Astrocyte of the cerebellum (primary cell): ENCODE measurements at regions of chr9 and their contacts with region 1.

Region 1: DNA sequence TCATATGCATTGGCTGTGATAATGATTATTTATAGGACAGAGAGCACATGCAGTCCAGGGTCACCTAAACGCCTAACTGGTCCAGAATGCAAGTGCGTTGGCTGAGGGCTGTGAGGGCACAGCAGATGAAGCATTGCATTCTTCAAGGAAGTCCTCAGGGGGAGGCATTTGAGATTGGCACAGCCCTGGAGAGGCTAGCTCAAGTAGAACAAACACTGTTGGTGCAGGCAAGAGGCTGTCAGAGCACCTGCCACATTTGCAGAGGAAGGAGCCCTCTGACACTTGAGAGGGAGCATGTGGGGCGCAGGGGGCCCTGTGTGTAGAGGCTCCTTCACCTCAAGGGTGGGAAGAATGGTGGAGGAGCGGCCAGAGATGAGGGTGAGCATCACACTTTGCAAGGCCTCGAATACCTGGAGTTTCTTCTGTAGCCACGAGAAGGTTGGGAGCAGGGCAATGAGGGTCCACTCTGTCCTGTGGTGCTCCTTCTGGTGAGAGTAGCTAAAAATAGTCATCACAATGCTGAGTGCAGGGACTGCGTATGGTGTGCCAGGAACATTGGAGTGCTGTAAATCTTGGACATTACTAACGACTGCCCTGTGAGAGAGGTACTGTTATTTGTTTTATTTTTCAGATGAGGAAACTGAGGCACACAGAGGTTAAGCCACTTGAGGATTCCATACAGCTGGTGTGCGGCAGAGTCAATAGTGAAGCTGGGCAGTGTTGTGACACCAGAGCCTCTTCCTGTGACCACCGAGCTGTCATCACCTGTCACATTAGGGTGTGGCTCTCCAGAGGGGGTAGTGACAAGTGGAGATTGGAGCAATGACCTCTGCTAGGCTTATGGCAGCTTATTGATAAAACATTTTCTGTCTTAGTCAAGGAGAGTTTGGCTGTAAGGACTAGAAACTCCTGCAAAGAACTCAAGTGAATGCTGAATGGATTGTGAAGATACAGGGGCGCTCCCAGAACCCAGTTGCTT is 100.2 kb downstream of the PIP5K1B start:
- DNase-seq: no peak
- H3K4me3 ChIP-seq: no peak overlapping the region
- CTCF ChIP-seq: no peak

Region 2: DNA sequence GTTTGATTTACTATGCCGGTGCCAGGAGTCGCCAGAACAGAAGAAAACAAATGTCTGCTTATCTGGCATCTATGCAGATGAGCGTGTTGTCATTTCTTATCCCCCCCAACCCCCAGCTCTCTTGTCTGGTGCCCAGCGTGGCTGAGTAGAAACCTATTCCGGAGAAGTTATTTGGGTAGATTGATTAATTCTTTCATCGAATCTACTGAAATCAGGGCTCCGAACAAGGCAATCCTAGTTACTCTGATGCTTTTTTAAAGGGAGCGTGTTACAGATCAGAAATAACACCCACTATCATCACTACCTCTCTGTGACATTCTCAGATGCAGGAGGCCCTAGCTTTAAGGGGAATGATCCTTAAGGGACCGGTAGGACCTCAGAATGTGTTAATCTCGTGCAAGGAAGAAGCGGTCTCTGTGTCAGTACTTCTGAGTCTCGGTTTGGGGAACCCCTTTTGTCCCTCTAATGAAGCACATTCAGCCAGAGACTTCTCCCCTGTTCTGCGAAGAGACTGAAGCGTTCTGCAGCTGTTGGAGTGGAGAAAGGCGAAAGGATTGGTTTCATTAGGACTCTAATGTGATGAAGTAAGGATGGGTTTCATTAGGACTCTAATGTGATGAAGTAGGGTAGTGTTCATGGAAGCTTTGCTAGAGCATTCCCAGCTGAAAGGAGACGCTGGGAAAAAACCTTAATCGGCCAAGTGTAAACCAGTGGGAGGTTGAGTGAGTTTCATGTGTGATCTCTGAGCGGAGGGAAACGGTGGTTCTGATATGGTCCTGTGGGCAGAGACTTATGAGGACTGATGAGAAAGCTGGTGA is 98.6 kb before region 1 on chr9:
- in situ Hi-C with region 1: no loop called
- DNase-seq: no peak
- H3K4me3 ChIP-seq: no peak overlapping the region
- CTCF ChIP-seq: no peak

Region 3: DNA sequence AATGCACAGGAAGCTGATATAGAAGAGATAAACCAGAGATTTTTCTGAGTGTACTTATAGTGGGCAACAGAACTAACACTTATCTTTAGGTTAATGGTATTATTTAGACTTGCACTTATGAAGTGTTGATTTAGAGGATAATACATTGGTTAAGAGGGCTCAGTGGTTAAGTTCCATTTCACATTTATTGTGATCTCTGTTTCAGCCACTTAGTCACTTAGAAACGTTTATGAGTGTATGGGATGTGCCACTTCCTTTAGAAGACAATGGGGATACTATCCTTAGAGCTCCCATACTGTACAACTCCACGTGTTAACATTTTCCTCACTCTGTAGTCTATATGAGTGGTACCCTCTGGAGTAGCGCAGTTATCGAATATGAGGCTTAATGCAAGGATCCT is 42.6 kb before region 1 on chr9:
- in situ Hi-C with region 1: loop called (anchors 5 kb)
- DNase-seq: no peak
- H3K4me3 ChIP-seq: no peak overlapping the region
- CTCF ChIP-seq: no peak

Region 4: GRCh38 chr9:68844631-68845612 is 39.7 kb after region 1 on chr9:
- in situ Hi-C with region 1: loop called (anchors 5 kb)
- DNase-seq: no peak
- H3K4me3 ChIP-seq: no peak overlapping the region
- CTCF ChIP-seq: peak; percentile 53

Region 5: DNA sequence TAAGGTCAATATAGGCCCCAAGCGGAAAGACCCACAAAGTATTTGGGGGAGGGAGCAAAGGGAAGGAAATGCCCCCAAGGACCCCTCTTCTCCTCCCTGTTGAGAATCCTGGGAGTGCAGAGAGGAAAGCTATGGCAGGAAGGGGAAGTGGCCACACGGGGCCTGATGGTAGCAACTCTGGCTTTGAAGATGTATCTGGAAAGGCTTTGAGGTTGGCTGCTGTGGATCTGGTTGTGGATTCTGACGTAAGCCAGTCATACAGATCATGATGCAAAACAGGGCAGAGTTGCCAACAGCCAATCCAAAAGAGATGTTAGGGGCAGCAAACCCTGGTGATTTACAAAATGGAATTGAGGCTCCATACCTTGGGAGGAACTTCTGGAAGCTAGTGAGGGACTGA is 99.9 kb after region 1 on chr9:
- in situ Hi-C with region 1: loop called (anchors 5 kb)
- DNase-seq: no peak
- H3K4me3 ChIP-seq: no peak overlapping the region
- CTCF ChIP-seq: no peak